Ovary (tissue), 10 donors: ENCODE measurements at regions of chr5 and their contacts with region 1.

Region 1: GRCh38 chr5:118076490-118076889 is 911.9 kb downstream of the DTWD2 start:
- DNase-seq: no peak
- H3K4me3 ChIP-seq: no peak overlapping the region
- H3K27ac ChIP-seq: no peak overlapping the region
- H3K4me1 ChIP-seq: no peaks in the 10 kb centered on the region
- H3K27me3 ChIP-seq: no peaks in the 10 kb centered on the region
- CTCF ChIP-seq: no peak
- EP300 ChIP-seq: no peak
- POLR2A ChIP-seq: no peak

Region 2: DNA sequence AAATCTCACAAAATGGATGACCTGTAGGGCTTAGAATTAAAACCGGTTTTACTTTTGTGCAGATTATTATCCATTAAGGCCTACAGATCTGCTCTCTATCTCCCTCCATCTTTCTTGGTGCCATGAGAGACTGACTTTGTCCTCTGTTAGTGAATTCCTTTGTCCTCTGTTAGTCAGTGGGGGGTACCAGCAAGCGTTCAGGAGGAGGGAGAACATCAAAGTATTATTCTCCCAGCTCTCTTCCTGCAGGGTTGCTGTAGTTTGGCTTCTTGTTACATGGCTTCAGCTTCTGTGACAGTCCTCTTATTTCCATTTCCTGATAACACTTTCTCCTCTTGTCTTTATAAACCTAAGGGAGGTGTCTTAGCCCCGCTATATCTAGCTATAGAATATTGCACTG is 651.3 kb before region 1 on chr5:
- intact Hi-C with region 1: no loop called
- DNase-seq: no peak
- H3K4me3 ChIP-seq: no peak overlapping the region
- H3K27ac ChIP-seq: no peak overlapping the region
- H3K4me1 ChIP-seq: no peaks in the 10 kb centered on the region
- H3K27me3 ChIP-seq: no peaks in the 10 kb centered on the region
- CTCF ChIP-seq: no peak
- EP300 ChIP-seq: no peak
- POLR2A ChIP-seq: no peak

Region 3: GRCh38 chr5:118052503-118052902 is 24.0 kb before region 1 on chr5:
- intact Hi-C with region 1: no loop called
- DNase-seq: no peak
- H3K4me3 ChIP-seq: no peak overlapping the region
- H3K27ac ChIP-seq: no peak overlapping the region
- H3K4me1 ChIP-seq: no peaks in the 10 kb centered on the region
- H3K27me3 ChIP-seq: no peaks in the 10 kb centered on the region
- CTCF ChIP-seq: no peak
- EP300 ChIP-seq: no peak
- POLR2A ChIP-seq: no peak

Region 4: DNA sequence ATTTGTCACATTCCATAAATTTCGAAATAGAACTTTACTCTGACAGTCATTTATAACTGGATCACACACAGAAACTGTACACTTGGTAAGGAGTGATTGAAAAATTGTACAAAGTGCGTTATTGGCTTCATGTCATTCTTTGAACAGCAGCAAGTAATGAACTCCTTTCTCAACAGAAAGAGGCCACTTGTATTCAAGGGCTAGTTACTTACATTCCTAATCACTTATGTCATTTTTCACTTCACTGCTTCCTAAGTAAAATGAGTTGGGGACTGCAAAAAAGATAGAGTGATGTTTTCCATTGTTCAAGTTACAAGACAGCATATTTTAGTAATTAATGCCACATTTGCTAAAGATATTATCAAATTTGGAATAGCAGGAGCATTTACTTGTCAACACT is 18.6 kb after region 1 on chr5:
- intact Hi-C with region 1: loop called in 1 of 4 experiments (anchors 1 kb)
- DNase-seq: no peak
- H3K4me3 ChIP-seq: no peak overlapping the region
- H3K27ac ChIP-seq: no peak overlapping the region
- H3K4me1 ChIP-seq: no peaks in the 10 kb centered on the region
- H3K27me3 ChIP-seq: no peaks in the 10 kb centered on the region
- CTCF ChIP-seq: no peak
- EP300 ChIP-seq: no peak
- POLR2A ChIP-seq: no peak